Activated CD8-positive, alpha-beta T cell treated with anti-CD3 and anti-CD28 coated beads for 36 hours (primary cell): ENCODE measurements at regions of chr7 and their contacts with region 1.

Region 1: DNA sequence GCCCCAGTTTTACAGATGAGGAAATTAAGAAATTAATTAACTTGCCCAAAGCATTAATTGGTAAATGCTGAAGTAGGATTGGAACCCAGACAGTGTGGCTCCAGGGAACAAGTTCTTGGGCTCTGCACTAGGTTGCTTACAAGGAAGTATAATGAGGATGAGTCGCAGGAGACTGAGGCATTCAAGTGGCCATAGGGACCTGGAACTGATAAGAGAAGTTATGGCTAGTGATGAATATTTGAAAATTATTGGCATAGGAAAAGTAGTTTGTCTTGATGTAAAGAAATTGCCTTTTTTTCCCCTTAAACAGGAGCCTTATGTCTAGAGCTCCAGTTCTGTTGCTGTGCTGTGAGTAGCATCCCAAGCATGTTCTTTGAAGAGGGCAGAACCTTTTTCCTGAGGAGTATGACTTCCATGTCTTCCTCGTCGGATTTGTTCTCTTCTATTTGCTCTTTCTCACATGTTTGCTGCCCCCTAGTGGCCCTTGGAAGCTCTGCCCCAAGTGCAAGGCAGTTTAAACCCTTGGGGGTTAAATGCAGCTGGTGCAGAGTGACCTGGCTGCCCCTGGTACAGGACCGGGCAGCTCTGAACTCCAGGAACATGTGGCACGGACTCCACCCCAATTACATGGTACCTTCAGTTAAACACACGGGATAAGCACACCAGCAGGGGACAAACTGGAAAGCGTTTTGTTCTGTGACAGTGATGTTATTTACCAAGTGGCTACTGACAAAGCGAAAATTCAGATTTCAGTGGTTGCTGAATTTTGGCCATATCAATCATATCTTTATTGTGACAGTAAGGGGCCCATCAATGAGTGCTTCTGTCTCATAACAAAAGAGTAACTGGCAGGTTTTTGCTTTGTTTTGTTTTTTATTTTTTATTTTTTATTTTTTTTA is 148.8 kb downstream of the HECW1 start:
- DNase-seq: peak; percentile 80
- ATAC-seq: peak; percentile 72
- H3K4me3 Mint-ChIP-seq: no peak overlapping the region
- H3K27ac Mint-ChIP-seq: no peak overlapping the region
- H3K4me1 Mint-ChIP-seq: no peaks in the 10 kb centered on the region
- H3K27me3 Mint-ChIP-seq: peaks cover 8% of the 10 kb centered on the region
- CTCF ChIP-seq: peak; percentile 90

Region 2: DNA sequence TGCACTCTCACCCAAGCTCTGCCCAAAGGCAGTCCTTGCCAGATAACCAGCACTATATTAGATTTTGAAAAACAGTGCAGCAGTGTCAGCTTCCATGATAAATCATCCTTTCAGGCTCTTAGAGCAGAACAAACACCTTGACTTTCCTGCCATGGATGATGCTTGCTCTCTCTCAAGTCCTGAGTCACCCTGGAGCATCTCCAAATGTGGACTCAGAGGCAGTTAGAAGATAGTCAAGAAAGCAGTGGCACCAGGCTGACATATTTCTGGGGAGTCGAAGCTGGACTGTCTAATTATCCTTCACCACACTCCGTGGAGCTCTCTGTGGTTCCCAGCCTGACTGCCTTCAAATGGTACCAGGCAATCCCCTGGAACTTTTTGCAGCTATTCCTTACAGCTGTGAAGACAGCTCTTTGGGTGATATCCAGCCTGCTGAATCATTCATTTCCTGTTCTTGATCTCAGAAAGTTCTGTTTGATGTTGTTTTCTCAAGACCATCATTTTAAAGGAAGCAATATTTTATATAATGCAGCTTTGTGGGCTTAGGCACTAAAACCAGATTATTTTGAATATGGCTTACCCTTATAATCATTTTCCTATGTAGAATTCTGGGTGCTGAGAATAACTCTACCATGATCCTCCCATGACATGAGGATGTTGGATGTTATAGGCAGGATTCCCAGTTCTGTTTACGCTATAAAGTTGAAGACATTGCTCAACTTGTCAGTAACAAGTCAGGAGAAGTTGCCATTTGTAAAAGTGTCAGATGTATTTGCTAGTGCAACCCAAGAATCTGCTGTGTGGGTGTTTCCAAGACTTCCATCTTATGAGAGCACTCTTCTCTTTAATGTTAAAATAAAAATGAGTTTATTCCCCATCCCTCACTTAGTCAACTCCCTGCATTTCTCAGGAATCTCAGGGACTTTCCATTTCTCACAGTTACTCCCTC is 583.2 kb before region 1 on chr7:
- CTCF ChIA-PET with region 1: no interaction called
- POLR2A ChIA-PET with region 1: no interaction called
- intact Hi-C with region 1: no loop called
- DNase-seq: no peak
- ATAC-seq: no peak
- H3K4me3 Mint-ChIP-seq: no peak overlapping the region
- H3K27ac Mint-ChIP-seq: no peak overlapping the region
- H3K4me1 Mint-ChIP-seq: no peaks in the 10 kb centered on the region
- H3K27me3 Mint-ChIP-seq: peaks cover 6% of the 10 kb centered on the region
- CTCF ChIP-seq: no peak

Region 3: GRCh38 chr7:42940985-42941847 is 320.0 kb before region 1 on chr7:
- CTCF ChIA-PET with region 1: interaction called, 13 read pairs
- POLR2A ChIA-PET with region 1: no interaction called
- intact Hi-C with region 1: loop called (anchors 5 kb)
- DNase-seq: peak; percentile 93
- ATAC-seq: peak; percentile 61
- H3K4me3 Mint-ChIP-seq: no peak overlapping the region
- H3K27ac Mint-ChIP-seq: no peak overlapping the region
- H3K4me1 Mint-ChIP-seq: peaks cover 33% of the 10 kb centered on the region
- H3K27me3 Mint-ChIP-seq: no peaks in the 10 kb centered on the region
- CTCF ChIP-seq: peak; percentile 86

Region 4: DNA sequence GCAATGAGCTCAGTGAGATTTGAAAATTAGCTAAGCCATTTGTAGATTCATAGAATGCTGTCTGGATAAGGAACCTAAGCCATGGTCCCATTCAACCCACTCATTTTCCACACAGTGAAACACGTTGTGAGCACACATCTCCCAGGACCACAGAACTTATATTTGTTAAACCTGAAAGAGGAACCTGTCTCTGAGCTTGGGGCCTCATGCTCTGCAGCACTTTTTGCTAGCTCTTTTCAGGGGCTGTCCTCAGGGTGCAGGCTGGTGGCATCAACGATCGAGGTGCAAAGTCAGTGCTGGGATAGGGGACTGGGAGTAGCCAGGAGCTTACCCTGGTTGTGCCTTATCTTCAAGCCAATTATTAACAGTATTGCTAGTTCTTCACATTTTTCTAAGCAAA is 136.8 kb before region 1 on chr7:
- CTCF ChIA-PET with region 1: no interaction called
- POLR2A ChIA-PET with region 1: no interaction called
- intact Hi-C with region 1: no loop called
- DNase-seq: no peak
- ATAC-seq: no peak
- H3K4me3 Mint-ChIP-seq: no peak overlapping the region
- H3K27ac Mint-ChIP-seq: no peak overlapping the region
- H3K4me1 Mint-ChIP-seq: no peaks in the 10 kb centered on the region
- H3K27me3 Mint-ChIP-seq: peaks cover 16% of the 10 kb centered on the region
- CTCF ChIP-seq: no peak

Region 5: GRCh38 chr7:43248961-43249822 is 12.0 kb before region 1 on chr7:
- CTCF ChIA-PET with region 1: interaction called, 17 read pairs
- POLR2A ChIA-PET with region 1: interaction called, 3 read pairs
- intact Hi-C with region 1: no loop called
- DNase-seq: no peak
- ATAC-seq: no peak
- H3K4me3 Mint-ChIP-seq: no peak overlapping the region
- H3K27ac Mint-ChIP-seq: no peak overlapping the region
- H3K4me1 Mint-ChIP-seq: no peaks in the 10 kb centered on the region
- H3K27me3 Mint-ChIP-seq: peaks cover 4% of the 10 kb centered on the region
- CTCF ChIP-seq: no peak

Region 6: DNA sequence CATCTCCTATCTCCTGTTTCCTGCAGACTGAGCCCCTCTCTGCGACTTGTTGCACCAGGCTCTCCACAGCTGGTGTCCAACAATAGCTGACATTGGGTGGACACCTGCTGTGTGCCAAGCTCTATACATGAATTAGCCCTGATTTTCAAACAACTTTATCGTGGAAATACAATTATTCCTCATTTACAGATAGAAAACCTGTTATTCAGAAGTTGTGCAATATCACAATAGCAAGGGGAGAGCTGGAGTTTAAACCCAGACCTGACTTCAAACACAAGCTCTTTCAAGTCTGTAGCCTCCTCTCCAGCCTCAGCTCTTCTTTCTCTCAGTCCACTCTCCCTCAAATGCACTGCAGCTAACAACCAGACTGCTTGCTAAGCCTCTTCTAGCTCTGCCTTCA is 20.0 kb after region 1 on chr7:
- CTCF ChIA-PET with region 1: interaction called, 13 read pairs
- POLR2A ChIA-PET with region 1: interaction called, 3 read pairs
- intact Hi-C with region 1: no loop called
- DNase-seq: no peak
- ATAC-seq: no peak
- H3K4me3 Mint-ChIP-seq: no peak overlapping the region
- H3K27ac Mint-ChIP-seq: no peak overlapping the region
- H3K4me1 Mint-ChIP-seq: no peaks in the 10 kb centered on the region
- H3K27me3 Mint-ChIP-seq: peaks cover 16% of the 10 kb centered on the region
- CTCF ChIP-seq: no peak

Region 7: GRCh38 chr7:43294080-43294630 is 32.9 kb after region 1 on chr7:
- CTCF ChIA-PET with region 1: interaction called, 10 read pairs
- POLR2A ChIA-PET with region 1: no interaction called
- intact Hi-C with region 1: no loop called
- DNase-seq: no peak
- ATAC-seq: no peak
- H3K4me3 Mint-ChIP-seq: no peak overlapping the region
- H3K27ac Mint-ChIP-seq: no peak overlapping the region
- H3K4me1 Mint-ChIP-seq: no peaks in the 10 kb centered on the region
- H3K27me3 Mint-ChIP-seq: peaks cover 2% of the 10 kb centered on the region
- CTCF ChIP-seq: no peak

Region 8: DNA sequence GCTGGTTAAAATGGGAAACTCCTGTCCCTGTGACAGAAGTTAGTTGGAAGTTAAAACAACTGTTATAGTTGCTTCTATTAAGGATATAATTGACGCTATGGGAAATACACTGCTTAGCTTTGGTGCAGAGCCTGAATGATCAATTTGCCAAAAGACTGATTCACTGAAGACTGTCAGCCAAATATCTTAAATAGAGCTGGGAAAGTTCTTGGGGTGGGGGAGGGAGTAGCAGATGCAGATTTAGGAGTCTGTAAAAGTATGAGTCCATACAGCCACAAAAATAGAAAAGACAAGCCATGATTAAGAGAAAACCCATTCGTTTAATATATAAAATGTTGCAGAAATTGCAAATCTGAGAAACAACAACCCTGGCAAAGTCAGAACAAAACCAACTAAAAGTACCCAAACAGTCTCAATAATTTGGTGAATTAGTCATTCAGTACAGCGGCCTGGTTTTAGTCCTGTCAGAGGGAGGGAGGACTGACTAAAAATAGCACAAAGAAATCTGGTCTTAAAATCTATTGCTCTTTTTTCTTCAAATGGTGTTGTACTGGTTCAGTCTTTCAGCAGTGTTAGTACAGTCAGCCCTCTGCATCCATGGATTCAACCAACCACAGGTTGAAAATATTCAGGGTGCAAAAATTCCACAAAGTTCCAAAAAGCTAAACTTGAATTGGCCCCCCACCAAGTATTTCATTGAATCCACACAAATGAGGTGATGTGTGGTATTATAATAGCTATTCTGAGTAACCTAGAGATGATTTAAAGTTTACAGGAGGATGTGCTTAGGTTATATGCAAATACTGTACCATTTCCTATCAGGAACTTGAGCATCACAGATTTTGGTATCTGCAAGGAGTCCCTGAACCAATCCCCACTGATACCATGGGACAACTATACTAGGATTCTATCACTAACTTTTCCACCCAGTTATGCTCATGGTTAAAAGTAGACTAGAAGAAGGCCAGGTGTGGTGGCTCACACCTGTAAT is 351.7 kb after region 1 on chr7:
- CTCF ChIA-PET with region 1: no interaction called
- POLR2A ChIA-PET with region 1: no interaction called
- intact Hi-C with region 1: no loop called
- DNase-seq: peak; percentile 52
- ATAC-seq: peak; percentile 79
- H3K4me3 Mint-ChIP-seq: peak overlapping the region; percentile 22
- H3K27ac Mint-ChIP-seq: peak overlapping the region; percentile 96
- H3K4me1 Mint-ChIP-seq: peaks cover 67% of the 10 kb centered on the region
- H3K27me3 Mint-ChIP-seq: no peaks in the 10 kb centered on the region
- CTCF ChIP-seq: no peak